Activated CD8-positive, alpha-beta T cell treated with anti-CD3 and anti-CD28 coated beads for 36 hours (primary cell): ENCODE measurements at regions of chr7 and their contacts with region 1.

Region 1: GRCh38 chr7:2978403-2978802 is 65.3 kb downstream of the CARD11 start:
- DNase-seq: peak; percentile 98
- ATAC-seq: peak; percentile 87
- H3K4me3 Mint-ChIP-seq: peak overlapping the region; percentile 78
- H3K27ac Mint-ChIP-seq: peak overlapping the region; percentile 93
- H3K4me1 Mint-ChIP-seq: peaks cover 67% of the 10 kb centered on the region
- H3K27me3 Mint-ChIP-seq: no peaks in the 10 kb centered on the region
- CTCF ChIP-seq: no peak

Region 2: GRCh38 chr7:2966466-2967078 is 11.8 kb before region 1 on chr7:
- CTCF ChIA-PET with region 1: interaction called, 4 read pairs
- POLR2A ChIA-PET with region 1: interaction called, 19 read pairs
- intact Hi-C with region 1: no loop called
- DNase-seq: no peak
- ATAC-seq: peak; percentile 12
- H3K4me3 Mint-ChIP-seq: no peak overlapping the region
- H3K27ac Mint-ChIP-seq: no peak overlapping the region
- H3K4me1 Mint-ChIP-seq: peaks cover 47% of the 10 kb centered on the region
- H3K27me3 Mint-ChIP-seq: no peaks in the 10 kb centered on the region
- CTCF ChIP-seq: no peak

Region 3: GRCh38 chr7:3042861-3043489 is 64.6 kb after region 1 on chr7:
- CTCF ChIA-PET with region 1: interaction called, 5 read pairs
- POLR2A ChIA-PET with region 1: interaction called, 6 read pairs
- intact Hi-C with region 1: loop called (anchors 5 kb)
- DNase-seq: peak; percentile 88
- ATAC-seq: peak; percentile 73
- H3K4me3 Mint-ChIP-seq: peak overlapping the region; percentile 96
- H3K27ac Mint-ChIP-seq: peak overlapping the region; percentile 96
- H3K4me1 Mint-ChIP-seq: peaks cover 53% of the 10 kb centered on the region
- H3K27me3 Mint-ChIP-seq: no peaks in the 10 kb centered on the region
- CTCF ChIP-seq: no peak